ENCODE measurements at regions of chr4 and their contacts with region 1.

Region 1: DNA sequence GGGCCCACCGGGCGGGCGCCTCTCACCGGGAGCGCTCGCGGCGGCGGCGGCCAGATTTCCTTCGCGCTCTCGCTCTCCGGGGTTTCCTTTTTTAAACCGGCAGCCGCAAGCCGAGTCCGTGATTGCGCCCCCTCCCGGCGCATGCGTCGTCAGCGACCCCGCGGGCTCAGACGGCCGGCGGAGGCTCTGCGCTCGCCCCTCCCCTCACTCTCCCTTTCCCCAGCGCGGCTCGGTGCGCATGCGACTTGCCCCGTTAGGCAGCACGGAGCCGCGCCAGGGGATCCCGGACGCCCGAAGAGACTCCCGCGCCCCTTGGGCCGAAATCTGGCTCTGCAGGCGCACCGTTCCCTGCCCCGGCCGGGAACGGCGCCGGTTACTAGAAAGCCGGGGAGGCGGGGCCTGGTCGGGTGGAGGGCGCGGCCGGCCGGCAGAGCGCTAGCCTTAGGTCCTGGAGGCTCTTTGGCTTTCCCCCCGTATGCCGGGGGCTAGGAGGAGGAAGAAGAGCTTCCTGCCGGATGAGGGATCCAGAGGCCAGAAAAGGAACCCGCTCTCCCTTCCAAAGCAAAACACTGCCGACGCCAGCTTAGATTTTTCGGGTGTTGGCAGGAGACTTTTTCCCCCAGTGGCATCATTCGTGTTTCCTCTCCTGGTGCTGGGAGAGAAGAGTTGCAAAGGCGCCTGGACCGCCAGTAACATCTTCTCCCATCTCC is at the start of gene CLOCK:
- DNase-seq: peak; percentile 89
- H3K4me3 ChIP-seq: peak within 1 kb of the TSS; percentile 86 to 92 (median 88)
- H3K27ac ChIP-seq: peak within 1 kb of the TSS; percentile 67
- H3K4me1 ChIP-seq: peaks cover 11% of the 10 kb centered on the region
- H3K27me3 ChIP-seq: peaks cover 0 to 2% of the 10 kb centered on the region in 2 experiments
- CTCF ChIP-seq: peak; percentile 41 to 66
- POLR2A ChIP-seq: peak; percentile 44
- total RNA-seq, gene CLOCK: 22.2 and 23.8 TPM in 2 replicates

Region 2: DNA sequence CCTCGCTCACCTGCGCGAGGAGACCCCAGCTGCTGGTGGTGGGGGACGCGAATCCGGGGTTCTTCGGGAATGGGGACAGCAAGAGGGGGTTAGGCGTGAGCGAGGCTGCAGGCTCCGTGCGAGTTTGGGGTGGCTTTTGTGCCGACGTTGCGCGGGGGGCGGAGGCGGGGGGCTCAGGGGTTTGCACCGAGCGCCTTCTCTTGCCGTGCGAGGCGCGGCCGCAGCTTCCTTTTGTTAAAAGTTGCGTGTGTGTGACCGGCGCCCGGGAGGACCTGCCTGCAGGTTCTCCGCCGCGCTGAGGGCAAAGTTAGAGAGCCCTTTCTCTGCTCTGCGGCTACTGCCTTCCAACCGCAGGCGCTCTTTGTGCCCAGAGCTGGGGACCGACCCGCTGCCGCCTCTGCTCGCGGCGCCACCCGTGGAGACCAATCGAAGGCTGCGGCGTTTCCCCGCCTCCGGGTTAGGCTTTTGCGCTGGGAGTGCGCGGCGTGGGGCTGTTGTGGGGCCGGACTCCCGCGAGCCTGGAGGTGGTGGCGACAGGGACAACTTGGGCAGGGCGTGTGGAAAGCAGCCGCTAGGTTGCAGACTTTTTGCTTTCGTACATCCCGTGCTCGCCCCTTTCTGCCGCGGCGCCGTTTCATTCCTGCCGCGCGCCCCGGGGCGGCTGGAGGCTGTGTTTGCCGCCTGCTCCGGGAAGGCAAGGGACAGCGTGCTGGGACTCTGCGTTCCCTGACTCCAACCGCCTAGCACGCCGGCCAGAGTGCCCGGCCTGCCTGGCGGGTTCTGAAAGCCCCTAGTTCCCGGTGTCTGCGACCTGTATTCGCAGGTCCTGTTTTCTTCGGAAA is 888.4 kb before region 1 on chr4:
- CTCF ChIA-PET with region 1: no interaction called
- POLR2A ChIA-PET with region 1: no interaction called
- dilution Hi-C with region 1: no loop called
- intact Hi-C with region 1: loop called (anchors 5 kb)
- DNase-seq: peak; percentile 62
- H3K4me3 ChIP-seq: peak overlapping the region; percentile 46 to 69 (median 54)
- H3K27ac ChIP-seq: no peak overlapping the region
- H3K4me1 ChIP-seq: peaks cover 16% of the 10 kb centered on the region
- H3K27me3 ChIP-seq: peaks cover 27 to 70% of the 10 kb centered on the region in 2 experiments
- CTCF ChIP-seq: peak in 1 of 2 donors; percentile 47
- POLR2A ChIP-seq: no peak

Region 3: GRCh38 chr4:54992266-54992665 is 554.6 kb before region 1 on chr4:
- CTCF ChIA-PET with region 1: no interaction called
- POLR2A ChIA-PET with region 1: no interaction called
- dilution Hi-C with region 1: no loop called
- intact Hi-C with region 1: no loop called
- DNase-seq: no peak
- H3K4me3 ChIP-seq: no peak overlapping the region
- H3K27ac ChIP-seq: no peak overlapping the region
- H3K4me1 ChIP-seq: no peaks in the 10 kb centered on the region
- H3K27me3 ChIP-seq: no peaks in the 10 kb centered on the region
- CTCF ChIP-seq: no peak
- POLR2A ChIP-seq: no peak

Region 4: GRCh38 chr4:55143863-55144262 is 403.0 kb before region 1 on chr4:
- CTCF ChIA-PET with region 1: no interaction called
- POLR2A ChIA-PET with region 1: no interaction called
- dilution Hi-C with region 1: no loop called
- intact Hi-C with region 1: no loop called
- DNase-seq: no peak
- H3K4me3 ChIP-seq: no peak overlapping the region
- H3K27ac ChIP-seq: no peak overlapping the region
- H3K4me1 ChIP-seq: no peaks in the 10 kb centered on the region
- H3K27me3 ChIP-seq: no peaks in the 10 kb centered on the region
- CTCF ChIP-seq: no peak
- POLR2A ChIP-seq: no peak

Region 5: GRCh38 chr4:55175779-55176231 is 371.1 kb before region 1 on chr4:
- CTCF ChIA-PET with region 1: no interaction called
- POLR2A ChIA-PET with region 1: no interaction called
- dilution Hi-C with region 1: no loop called
- intact Hi-C with region 1: loop called (anchors 5 kb)
- DNase-seq: peak; percentile 66
- H3K4me3 ChIP-seq: peak overlapping the region in 1 of 3 experiments; percentile 39
- H3K27ac ChIP-seq: peak overlapping the region; percentile 91
- H3K4me1 ChIP-seq: peaks cover 72% of the 10 kb centered on the region
- H3K27me3 ChIP-seq: no peaks in the 10 kb centered on the region
- CTCF ChIP-seq: no peak
- POLR2A ChIP-seq: no peak

Region 6: DNA sequence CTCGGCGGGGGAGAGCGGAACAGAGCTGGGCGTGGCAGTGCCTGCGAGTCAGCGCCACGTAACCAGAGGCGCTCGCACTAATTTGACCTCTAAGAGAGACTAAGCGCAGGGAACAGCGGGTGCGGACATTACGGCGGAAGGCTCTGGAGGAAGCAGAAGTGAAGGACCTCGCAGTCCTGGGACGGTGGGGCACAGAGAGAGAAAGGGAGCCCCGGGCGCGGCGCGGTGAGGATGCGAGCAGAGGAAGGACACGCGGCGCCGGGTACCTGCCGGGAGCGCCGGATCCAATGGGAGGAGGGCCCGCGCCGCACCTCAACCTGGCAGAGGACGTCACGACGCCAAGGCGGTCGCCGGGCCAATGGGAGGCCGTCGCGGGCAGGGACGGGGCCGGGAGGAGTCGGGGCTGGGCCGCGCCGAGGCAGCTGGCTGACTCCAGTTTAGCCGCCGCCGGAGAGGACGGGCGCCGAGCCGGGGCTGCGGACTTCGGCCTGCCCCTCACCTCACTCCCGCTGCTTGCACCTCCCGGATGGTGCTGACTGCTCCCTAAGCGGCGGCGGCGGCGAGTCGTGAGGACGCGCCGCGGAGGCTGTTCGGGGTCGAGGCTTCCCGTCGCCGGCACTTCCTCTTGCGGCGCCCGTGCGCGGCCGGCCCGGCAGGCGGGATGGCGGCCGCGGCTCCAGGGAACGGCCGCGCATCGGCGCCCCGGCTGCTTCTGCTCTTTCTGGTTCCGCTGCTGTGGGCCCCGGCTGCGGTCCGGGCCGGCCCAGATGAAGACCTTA is 151.2 kb before region 1 on chr4 and contains the start of gene TMEM165:
- CTCF ChIA-PET with region 1: interaction called, 6 read pairs
- POLR2A ChIA-PET with region 1: no interaction called
- dilution Hi-C with region 1: no loop called
- intact Hi-C with region 1: loop called (anchors 1 kb)
- DNase-seq: peak; percentile 88
- H3K4me3 ChIP-seq: peak within 1 kb of the TSS; percentile 89 to 98 (median 91)
- H3K27ac ChIP-seq: peak within 1 kb of the TSS; percentile 79
- H3K4me1 ChIP-seq: peaks cover 19% of the 10 kb centered on the region
- H3K27me3 ChIP-seq: no peaks in the 10 kb centered on the region
- CTCF ChIP-seq: no peak
- POLR2A ChIP-seq: peak; percentile 97
- total RNA-seq, gene TMEM165: 159 and 177 TPM in 2 replicates

Region 7: DNA sequence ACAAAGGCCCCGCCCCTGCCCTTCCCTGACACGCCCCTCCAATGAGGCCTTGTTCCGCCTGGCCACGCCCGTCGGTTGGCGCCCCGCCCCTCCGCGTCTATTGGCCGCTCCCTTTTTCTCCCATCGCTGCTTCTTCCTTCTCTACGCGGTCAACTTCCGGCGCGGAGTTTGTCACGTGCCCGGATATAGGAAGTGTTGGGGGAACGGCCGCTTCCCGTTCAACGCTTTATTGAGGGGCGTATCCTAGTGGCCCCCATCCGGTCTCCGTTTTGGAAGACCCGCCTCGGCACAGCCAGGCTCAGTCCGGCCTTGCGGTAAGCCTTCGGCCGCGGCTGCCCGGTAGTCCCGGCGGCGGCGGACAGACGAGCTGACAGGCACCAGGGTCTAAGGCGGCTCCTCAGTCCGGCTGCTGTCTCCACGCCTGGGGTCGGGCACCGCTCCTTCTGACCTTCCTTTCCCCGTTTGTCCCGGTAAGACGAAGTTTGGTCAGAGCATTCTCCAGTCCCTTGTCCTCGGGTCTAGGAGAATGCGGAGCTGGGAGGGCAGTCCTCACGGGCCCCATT is 306.7 kb after region 1 on chr4 and contains the start of gene EXOC1:
- CTCF ChIA-PET with region 1: no interaction called
- POLR2A ChIA-PET with region 1: no interaction called
- dilution Hi-C with region 1: no loop called
- intact Hi-C with region 1: loop called (anchors 2 kb)
- DNase-seq: peak; percentile 97
- H3K4me3 ChIP-seq: peak within 1 kb of the TSS; percentile 59 to 79 (median 64)
- H3K27ac ChIP-seq: peak within 1 kb of the TSS; percentile 51
- H3K4me1 ChIP-seq: peaks cover 8% of the 10 kb centered on the region
- H3K27me3 ChIP-seq: peaks cover 16 to 22% of the 10 kb centered on the region in 2 experiments
- CTCF ChIP-seq: no peak
- POLR2A ChIP-seq: peak; percentile 83
- total RNA-seq, gene EXOC1: 30.5 and 33.3 TPM in 2 replicates

Region 8: GRCh38 chr4:56301181-56302076 is 754.5 kb after region 1 on chr4:
- CTCF ChIA-PET with region 1: no interaction called
- POLR2A ChIA-PET with region 1: no interaction called
- dilution Hi-C with region 1: no loop called
- intact Hi-C with region 1: loop called (anchors 2 kb)
- DNase-seq: peak; percentile 84
- H3K4me3 ChIP-seq: peak overlapping the region in 1 of 3 experiments; percentile 23
- H3K27ac ChIP-seq: peak overlapping the region; percentile 35
- H3K4me1 ChIP-seq: no peaks in the 10 kb centered on the region
- H3K27me3 ChIP-seq: no peaks in the 10 kb centered on the region
- CTCF ChIP-seq: peak; percentile 90
- POLR2A ChIP-seq: no peak

Measured in endothelial cell of umbilical vein (primary cell).